SK-MEL-5 (cell line): ENCODE measurements at regions of chr7 and their contacts with region 1.

Region 1: DNA sequence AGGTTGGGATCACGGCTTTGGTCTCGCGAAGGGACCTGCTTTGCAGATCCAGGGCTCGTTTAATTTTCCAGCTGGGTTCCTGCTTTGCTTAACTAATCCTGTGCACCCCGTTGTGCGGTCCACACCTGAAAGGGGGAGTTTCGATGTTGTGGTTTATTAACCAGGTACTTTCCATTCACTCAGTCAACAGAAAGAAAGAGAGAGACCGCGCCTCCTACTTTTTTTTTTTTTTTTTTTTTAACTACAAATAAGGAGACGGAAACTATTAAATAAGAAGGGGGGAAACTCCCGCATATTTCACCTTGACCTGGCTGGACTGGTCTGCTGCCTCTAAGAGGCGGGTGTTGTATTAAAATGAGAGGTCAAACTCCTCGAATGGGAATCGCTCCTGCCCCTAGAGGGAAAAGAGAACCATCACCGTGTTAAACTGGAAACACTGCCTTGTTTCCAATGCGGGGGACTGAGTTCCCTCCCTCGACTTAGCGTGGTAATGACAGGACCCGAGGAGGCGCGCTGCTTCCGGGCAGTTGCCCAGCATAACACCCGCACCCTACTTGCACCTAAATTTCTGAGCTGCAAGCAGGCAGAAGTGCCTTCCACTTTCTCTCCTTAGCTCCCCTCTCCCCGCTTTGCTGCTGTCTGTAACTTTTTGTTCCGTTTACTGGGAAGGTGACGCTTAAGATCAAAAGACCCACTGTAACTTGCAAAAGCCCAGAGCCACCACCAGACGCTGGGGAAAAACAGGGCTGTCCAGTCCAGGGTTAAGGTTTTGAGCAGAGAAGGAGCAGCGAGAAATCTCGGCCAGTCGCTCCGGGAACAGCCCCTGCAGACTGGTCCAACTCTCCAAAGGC is 1.1 kb upstream of the ITGB8 start:
- DNase-seq: peak; percentile 92

Region 2: GRCh38 chr7:19754521-19755116 is 575.0 kb before region 1 on chr7:
- in situ Hi-C with region 1: loop called (anchors 10 kb)
- DNase-seq: peak; percentile 75